ENCODE measurements at regions of chr4 and their contacts with region 1.

Region 1: DNA sequence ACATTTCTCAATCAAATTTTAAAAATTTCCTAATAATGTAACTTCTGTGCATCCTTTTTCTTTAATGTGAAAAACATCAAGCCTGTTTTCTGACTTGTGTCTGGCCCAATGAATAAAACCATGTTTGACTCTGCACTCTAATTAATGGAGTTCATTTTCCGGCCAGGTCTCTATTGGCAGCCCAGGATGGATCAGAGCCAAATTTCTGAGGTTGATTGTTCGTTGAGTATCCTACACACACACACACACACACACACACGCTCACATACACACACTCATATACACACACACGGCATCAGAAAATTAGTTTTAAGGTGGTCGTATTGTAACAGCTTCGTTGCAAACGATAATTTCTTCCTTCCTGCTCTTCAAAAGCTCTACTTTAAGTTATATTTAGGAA is 28.9 kb upstream of the TLL1 start:
- DNase-seq: peak in 2 of 5 donors; percentile 27 to 29
- ATAC-seq: peak in 1 of 4 donors; percentile 40
- H3K4me3 ChIP-seq: no peak overlapping the region
- H3K27ac ChIP-seq: no peak overlapping the region
- H3K4me1 ChIP-seq: peaks cover 0 to 23% (median 0%) of the 10 kb centered on the region in 12 donors
- H3K27me3 ChIP-seq: no peaks in the 10 kb centered on the region
- CTCF ChIP-seq: no peak
- POLR2A ChIP-seq: no peak

Region 2: GRCh38 chr4:165765053-165765452 is 79.1 kb before region 1 on chr4:
- intact Hi-C with region 1: loop called in 1 of 10 experiments (anchors 10 kb)
- DNase-seq: no peak
- ATAC-seq: no peak
- H3K4me3 ChIP-seq: no peak overlapping the region
- H3K27ac ChIP-seq: no peak overlapping the region
- H3K4me1 ChIP-seq: peaks cover 0 to 15% (median 4%) of the 10 kb centered on the region in 12 donors
- H3K27me3 ChIP-seq: no peaks in the 10 kb centered on the region
- CTCF ChIP-seq: no peak
- POLR2A ChIP-seq: no peak

Region 3: DNA sequence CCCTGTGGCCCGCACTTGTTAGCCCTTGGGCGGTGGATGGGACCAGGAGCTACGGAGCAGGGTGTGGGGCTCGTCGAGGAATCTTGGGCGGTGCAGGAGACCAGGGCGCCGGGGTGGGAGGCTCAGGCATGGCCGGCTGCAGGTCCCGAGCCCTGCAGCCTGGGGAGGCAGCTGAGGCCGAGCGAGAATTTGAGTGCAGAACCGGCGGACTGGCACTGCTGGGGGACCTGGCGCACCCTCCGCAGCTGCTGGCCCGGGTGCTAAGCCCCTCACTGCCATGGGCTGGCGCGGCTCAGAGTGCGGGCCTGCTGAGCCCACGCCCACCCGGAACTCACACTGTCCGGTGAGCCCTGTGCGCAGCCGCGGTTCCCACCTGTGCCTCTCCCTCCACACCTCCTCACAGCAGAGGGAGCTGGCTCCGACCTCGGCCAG is 44.8 kb before region 1 on chr4:
- intact Hi-C with region 1: no loop called
- DNase-seq: no peak
- ATAC-seq: peak in 1 of 4 donors; percentile 45
- H3K4me3 ChIP-seq: no peak overlapping the region
- H3K27ac ChIP-seq: no peak overlapping the region
- H3K4me1 ChIP-seq: no peaks in the 10 kb centered on the region
- H3K27me3 ChIP-seq: no peaks in the 10 kb centered on the region
- CTCF ChIP-seq: no peak
- POLR2A ChIP-seq: no peak